ENCODE measurements at regions of chr19 and their contacts with region 1.

Region 1: DNA sequence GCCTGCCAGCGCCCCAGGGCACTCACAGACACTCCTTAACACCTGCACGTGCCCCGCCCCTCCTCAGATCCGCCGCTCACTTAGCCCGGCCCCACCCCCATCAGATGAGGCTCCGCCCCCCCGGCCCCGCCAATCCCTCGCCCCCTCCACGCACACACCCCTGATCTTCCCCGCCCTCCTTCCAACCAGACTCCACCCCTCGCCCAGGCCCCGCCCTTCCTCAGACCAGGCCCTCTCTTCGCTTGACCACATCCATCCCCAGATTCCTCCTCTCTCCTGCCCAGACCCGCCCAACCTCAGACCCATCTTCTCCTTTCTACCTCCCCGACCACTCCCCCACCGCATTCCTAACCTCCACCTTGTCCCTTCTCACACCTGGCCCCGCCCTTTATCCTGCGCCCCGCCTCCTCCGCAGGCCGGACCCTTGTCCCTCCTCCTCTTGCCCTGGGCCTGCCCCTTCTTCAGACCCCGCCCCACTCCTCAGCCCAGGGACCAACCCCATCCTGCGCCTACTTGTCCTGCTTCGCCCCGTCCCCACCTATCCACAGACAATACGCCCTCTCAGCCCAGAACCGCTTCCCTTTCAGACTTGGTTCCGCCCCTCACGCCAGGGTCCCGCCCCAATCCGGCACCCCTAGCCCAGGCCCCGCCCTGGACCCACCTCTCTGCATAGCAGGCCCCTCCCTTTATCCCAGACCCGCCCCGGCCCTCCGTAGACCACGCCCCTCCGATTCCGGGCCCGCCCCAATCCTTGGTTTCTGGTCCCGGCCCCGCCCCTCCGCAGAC is 452 bp upstream of the KLHL26 start:
- DNase-seq: peak; percentile 97
- H3K4me3 Mint-ChIP-seq: peak overlapping the region; percentile 80
- H3K27ac Mint-ChIP-seq: peak overlapping the region; percentile 61
- H3K4me1 Mint-ChIP-seq: peaks cover 22% of the 10 kb centered on the region
- H3K27me3 Mint-ChIP-seq: peaks cover 5% of the 10 kb centered on the region

Region 2: GRCh38 chr19:18007044-18007916 is 629.1 kb before region 1 on chr19:
- intact Hi-C with region 1: no loop called
- DNase-seq: peak; percentile 77
- H3K4me3 Mint-ChIP-seq: peak overlapping the region; percentile 93
- H3K27ac Mint-ChIP-seq: peak overlapping the region; percentile 93
- H3K4me1 Mint-ChIP-seq: peaks cover 47% of the 10 kb centered on the region
- H3K27me3 Mint-ChIP-seq: no peaks in the 10 kb centered on the region

Region 3: GRCh38 chr19:18160971-18161635 is 475.3 kb before region 1 on chr19:
- intact Hi-C with region 1: loop called (anchors 1 kb)
- DNase-seq: peak; percentile 80
- H3K4me3 Mint-ChIP-seq: peak overlapping the region; percentile 72
- H3K27ac Mint-ChIP-seq: no peak overlapping the region
- H3K4me1 Mint-ChIP-seq: peaks cover 5% of the 10 kb centered on the region
- H3K27me3 Mint-ChIP-seq: no peaks in the 10 kb centered on the region

Region 4: DNA sequence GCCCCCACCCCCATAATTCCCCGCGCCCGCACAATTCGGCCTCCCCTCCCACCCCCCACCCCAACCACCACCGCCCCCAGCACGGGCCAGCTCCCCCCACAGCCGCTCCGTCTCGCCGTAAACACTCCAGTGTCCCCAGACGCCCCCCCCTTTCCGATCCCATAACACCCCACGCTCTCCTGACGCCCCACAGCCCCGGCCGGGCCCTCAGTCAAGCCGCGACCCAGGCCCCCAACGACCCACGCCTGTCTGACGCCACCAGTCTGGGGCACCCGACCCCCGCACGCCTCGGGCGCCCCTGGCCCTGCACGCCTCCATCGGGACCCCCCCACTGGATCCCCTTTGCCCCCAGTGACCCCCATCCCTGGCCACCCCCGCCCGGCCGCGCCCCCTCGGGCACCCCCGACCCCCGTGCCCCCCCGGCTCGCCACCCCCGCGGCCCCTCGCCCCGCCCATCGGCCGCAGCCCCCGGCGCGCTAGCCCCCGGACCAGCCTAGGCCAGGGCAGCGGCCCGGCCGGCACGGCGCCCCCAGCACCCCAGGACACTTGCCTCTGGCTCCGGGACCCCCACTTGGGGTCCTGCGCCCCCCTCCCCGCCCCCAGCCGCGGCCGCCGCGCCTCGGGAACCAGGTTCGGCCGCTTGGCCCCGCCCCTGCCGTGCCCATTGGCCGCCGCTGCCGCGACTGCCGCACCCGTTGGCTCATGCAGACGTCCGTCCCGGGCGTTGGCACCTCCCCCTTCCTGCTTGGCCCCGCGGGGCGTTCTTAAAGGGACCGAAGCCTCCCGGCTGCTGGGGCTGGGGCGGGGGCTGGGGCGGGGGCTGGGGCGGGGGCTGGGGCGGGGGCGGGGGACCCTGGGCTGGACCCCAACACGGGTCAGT is 93.2 kb before region 1 on chr19 and contains the start of gene FKBP8:
- intact Hi-C with region 1: loop called (anchors 2 kb)
- DNase-seq: peak; percentile 92
- H3K4me3 Mint-ChIP-seq: peak within 1 kb of the TSS; percentile 92
- H3K27ac Mint-ChIP-seq: peak within 1 kb of the TSS; percentile 99
- H3K4me1 Mint-ChIP-seq: peaks cover 27% of the 10 kb centered on the region
- H3K27me3 Mint-ChIP-seq: peaks cover 4% of the 10 kb centered on the region
- total RNA-seq, gene FKBP8: 163 and 167 TPM in 2 replicates

Region 5: GRCh38 chr19:18683213-18683939 is 47.0 kb after region 1 on chr19 and contains the start of gene CRTC1:
- intact Hi-C with region 1: loop called (anchors 1 kb)
- DNase-seq: peak; percentile 91
- H3K4me3 Mint-ChIP-seq: peak within 1 kb of the TSS; percentile 83
- H3K27ac Mint-ChIP-seq: peak within 1 kb of the TSS; percentile 80
- H3K4me1 Mint-ChIP-seq: peaks cover 6% of the 10 kb centered on the region
- H3K27me3 Mint-ChIP-seq: peaks cover 2% of the 10 kb centered on the region
- total RNA-seq, gene CRTC1: 6.1 and 7.6 TPM in 2 replicates

Region 6: GRCh38 chr19:18894254-18895037 is 258.1 kb after region 1 on chr19:
- intact Hi-C with region 1: no loop called
- DNase-seq: no peak
- H3K4me3 Mint-ChIP-seq: no peak overlapping the region
- H3K27ac Mint-ChIP-seq: no peak overlapping the region
- H3K4me1 Mint-ChIP-seq: no peaks in the 10 kb centered on the region
- H3K27me3 Mint-ChIP-seq: peaks cover 18% of the 10 kb centered on the region

Region 7: GRCh38 chr19:18919086-18919899 is 282.9 kb after region 1 on chr19 and contains the starts of genes COPE and DDX49:
- intact Hi-C with region 1: loop called (anchors 1 kb)
- DNase-seq: peak; percentile 97
- H3K4me3 Mint-ChIP-seq: peak within 1 kb of the TSS; percentile 94
- H3K27ac Mint-ChIP-seq: peak within 1 kb of the TSS; percentile 84
- H3K4me1 Mint-ChIP-seq: peaks cover 21% of the 10 kb centered on the region
- H3K27me3 Mint-ChIP-seq: no peaks in the 10 kb centered on the region
- total RNA-seq, gene COPE: 221 and 229 TPM in 2 replicates
- total RNA-seq, gene DDX49: 101 and 114 TPM in 2 replicates

Region 8: DNA sequence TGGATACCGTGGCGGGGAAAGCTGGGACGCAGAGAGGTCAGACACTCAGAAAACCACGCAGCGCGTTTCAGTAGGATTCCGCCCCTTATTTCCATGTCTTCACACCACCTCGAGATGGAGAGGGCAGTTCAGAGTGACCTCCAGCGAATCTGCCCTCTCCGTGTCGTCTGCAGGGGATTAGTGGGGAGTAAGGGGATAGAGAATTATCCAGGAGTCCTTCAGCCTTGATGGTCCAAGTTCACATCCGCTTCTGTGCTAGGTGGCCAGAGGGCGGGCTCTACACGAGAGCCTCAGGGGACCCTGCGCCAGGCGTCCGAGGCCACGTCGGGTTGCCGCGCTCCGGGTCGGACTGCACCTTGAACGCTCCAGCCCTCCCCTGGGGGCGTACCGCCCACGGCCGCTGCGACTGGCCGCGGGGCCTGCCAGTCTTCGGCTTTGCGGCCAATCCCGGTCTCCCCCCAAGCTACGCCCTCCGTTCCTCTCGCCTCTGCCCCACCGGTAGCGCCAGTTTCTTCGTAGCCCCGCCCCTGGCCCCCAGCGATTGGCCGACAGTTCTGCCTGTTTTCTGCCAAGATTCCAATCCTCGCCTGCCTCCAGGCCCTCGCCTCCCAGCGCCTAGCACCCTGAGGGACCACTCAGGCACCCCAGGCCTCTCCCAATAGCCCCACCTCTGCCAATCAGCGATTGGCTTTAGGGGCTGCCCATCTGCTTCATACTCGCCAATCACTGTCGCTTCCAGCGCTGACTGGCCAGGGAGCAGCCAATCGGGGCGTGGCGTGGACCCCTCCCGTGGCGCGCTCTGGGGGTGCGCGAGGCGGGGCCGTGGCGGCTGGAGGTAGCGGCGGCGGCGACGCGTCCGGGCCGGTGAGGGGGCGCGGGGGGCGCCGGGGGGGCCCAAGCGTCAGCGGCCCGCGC is 427.1 kb after region 1 on chr19 and contains the start of gene SLC25A42:
- intact Hi-C with region 1: loop called (anchors 1 kb)
- DNase-seq: peak; percentile 99
- H3K4me3 Mint-ChIP-seq: peak within 1 kb of the TSS; percentile 84
- H3K27ac Mint-ChIP-seq: peak within 1 kb of the TSS; percentile 62
- H3K4me1 Mint-ChIP-seq: peaks cover 29% of the 10 kb centered on the region
- H3K27me3 Mint-ChIP-seq: no peaks in the 10 kb centered on the region
- total RNA-seq, gene SLC25A42: 7.8 and 10.8 TPM in 2 replicates